H1 (cell line): ENCODE measurements at regions of chr17 and their contacts with region 1.

Region 1: DNA sequence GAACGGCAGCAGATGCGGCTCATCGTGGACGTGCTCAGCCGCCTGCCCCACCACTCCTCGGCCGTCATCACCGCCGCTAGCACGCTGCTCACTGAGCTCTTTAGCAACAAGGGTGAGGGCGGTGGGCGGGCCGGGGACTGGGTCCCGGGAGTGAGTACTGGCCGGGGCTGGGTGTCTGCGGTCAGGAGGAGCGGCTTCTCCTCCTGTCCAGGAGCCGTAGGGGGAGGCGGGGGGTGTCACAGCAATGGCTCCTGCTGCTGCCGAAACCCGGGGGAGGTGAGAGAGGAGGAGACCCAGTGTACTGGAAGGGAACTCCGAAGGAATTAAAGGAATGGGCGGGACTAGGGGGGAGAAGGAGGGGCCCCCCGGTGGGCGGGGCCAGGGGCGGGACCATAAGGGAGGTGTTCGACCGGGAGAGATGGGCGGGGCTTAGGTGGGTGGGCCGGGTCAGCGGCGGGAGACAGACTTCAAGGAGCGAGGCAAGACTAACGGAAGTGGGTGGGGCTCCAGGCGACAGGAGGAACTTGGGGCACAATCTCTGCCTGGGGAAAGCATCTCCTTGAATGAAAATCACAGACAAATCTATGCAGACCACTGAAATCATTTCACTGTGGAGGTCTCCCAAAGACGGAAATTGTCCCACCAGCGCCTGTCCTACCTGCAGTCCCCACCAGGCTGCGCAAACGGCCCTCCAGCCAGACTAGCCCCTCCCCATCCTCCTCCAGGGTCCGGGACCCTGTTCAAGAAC is 2.4 kb downstream of the NAGS start:
- DNase-seq: peak; percentile 94 to 98
- H3K4me3 ChIP-seq: peak overlapping the region; percentile 72 to 86 (median 82)
- H3K27ac ChIP-seq: no peak overlapping the region
- H3K4me1 ChIP-seq: peaks cover 0 to 19% (median 13%) of the 10 kb centered on the region in 4 experiments; a peak in 6 of 7 replicates
- H3K27me3 ChIP-seq: peaks cover 0 to 21% (median 17%) of the 10 kb centered on the region in 4 experiments; a peak in 6 of 7 replicates
- CTCF ChIP-seq: peak; percentile 61 to 78 (median 76)
- EP300 ChIP-seq: no peak
- POLR2A ChIP-seq: no peak; a peak in 1 of 3 replicates
- RAD21 ChIP-seq: peak; percentile 42 to 55; a peak in 3 of 4 replicates

Region 2: GRCh38 chr17:43907425-43907981 is 99.3 kb before region 1 on chr17 and contains the start of gene MPP2:
- CTCF ChIA-PET with region 1: interaction called, 17 read pairs
- POLR2A ChIA-PET with region 1: no interaction called
- DNase-seq: peak in 1 of 2 experiments; percentile 91
- H3K4me3 ChIP-seq: peak within 1 kb of the TSS; percentile 42 to 81 (median 68)
- H3K27ac ChIP-seq: no peak within 1 kb of the TSS
- H3K4me1 ChIP-seq: peaks cover 4 to 23% (median 19%) of the 10 kb centered on the region in 4 experiments
- H3K27me3 ChIP-seq: peaks cover 0 to 21% (median 15%) of the 10 kb centered on the region in 4 experiments; a peak in 5 of 7 replicates
- CTCF ChIP-seq: no peak
- EP300 ChIP-seq: no peak
- POLR2A ChIP-seq: no peak
- RAD21 ChIP-seq: no peak
- total RNA-seq, gene MPP2: 30.9 and 31.6 TPM in 2 replicates

Region 3: DNA sequence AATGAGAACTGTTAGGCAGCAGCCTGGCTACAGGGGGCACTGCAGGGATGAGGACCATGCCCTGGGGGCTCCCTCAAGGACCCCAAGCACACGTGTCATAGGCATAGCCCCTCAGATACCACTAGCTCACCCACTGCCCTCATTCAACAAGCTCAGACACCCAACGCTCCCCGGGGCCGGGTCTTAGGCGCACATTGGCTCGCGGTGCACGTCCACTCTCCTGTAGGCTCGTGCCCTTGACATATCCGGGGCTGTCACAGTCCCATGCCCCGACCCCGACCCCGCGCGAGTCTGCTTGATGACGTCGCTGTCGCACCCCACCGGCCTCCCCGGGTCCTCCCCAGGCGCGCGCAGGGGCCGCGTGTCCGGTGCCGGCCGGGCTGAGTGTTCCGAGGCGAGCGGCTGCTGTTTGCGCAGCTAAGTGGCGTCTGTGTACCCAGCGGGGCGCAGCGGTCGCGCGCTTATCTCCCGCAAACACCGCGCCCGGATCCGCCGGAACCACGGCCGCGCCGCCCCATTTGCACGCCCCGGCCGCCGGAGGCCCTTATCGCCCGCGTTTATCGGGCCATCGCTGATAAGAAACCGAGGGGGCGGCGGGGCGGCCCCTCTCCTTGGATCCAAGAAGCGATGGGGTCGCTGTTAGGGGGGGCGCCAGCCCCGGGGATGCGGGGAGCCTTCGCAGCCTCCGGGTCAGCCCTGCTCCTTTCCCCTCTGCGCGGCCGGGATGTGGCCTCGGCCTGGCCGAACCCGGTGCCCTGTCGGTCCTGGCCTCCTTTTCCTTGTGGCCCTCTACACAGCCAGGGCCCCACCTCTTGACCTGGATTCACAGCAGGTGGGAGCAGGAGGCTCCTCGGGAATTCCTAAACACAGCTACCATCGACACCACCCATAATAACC is 23.0 kb before region 1 on chr17:
- CTCF ChIA-PET with region 1: interaction called, 32 read pairs
- POLR2A ChIA-PET with region 1: interaction called, 4 read pairs
- DNase-seq: peak in 1 of 2 experiments; percentile 82
- H3K4me3 ChIP-seq: peak overlapping the region; percentile 53 to 75 (median 60)
- H3K27ac ChIP-seq: no peak overlapping the region
- H3K4me1 ChIP-seq: peaks cover 0 to 4% (median 2%) of the 10 kb centered on the region in 4 experiments; a peak in 4 of 7 replicates
- H3K27me3 ChIP-seq: peaks cover 0 to 5% (median 4%) of the 10 kb centered on the region in 4 experiments; a peak in 3 of 7 replicates
- CTCF ChIP-seq: peak; percentile 63 to 85 (median 80)
- EP300 ChIP-seq: no peak
- POLR2A ChIP-seq: no peak
- RAD21 ChIP-seq: peak; percentile 24 to 53

Region 4: DNA sequence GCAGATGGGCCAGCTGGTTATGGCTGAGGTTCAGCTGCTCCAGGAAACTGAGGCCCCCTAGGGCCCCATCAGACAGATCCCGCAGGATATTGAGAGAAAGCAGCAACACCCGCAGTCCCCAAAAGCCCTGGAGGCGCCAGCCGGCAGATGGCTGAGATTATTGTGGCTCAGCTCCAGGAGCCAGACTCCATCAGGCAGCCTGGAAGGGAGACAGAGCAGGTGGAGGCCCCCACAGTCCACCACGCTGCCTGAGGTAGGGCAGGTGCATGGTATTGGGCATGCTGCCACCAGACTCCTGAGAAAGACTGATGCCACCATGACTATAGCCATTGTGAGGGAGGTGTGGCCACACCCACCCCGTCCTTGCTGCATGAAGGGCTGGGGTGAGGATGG is 17.5 kb after region 1 on chr17:
- CTCF ChIA-PET with region 1: interaction called, 19 read pairs
- POLR2A ChIA-PET with region 1: interaction called, 23 read pairs
- DNase-seq: no peak
- H3K4me3 ChIP-seq: no peak overlapping the region
- H3K27ac ChIP-seq: no peak overlapping the region
- H3K4me1 ChIP-seq: no peaks in the 10 kb centered on the region
- H3K27me3 ChIP-seq: no peaks in the 10 kb centered on the region
- CTCF ChIP-seq: no peak
- EP300 ChIP-seq: no peak
- POLR2A ChIP-seq: no peak
- RAD21 ChIP-seq: no peak

Region 5: DNA sequence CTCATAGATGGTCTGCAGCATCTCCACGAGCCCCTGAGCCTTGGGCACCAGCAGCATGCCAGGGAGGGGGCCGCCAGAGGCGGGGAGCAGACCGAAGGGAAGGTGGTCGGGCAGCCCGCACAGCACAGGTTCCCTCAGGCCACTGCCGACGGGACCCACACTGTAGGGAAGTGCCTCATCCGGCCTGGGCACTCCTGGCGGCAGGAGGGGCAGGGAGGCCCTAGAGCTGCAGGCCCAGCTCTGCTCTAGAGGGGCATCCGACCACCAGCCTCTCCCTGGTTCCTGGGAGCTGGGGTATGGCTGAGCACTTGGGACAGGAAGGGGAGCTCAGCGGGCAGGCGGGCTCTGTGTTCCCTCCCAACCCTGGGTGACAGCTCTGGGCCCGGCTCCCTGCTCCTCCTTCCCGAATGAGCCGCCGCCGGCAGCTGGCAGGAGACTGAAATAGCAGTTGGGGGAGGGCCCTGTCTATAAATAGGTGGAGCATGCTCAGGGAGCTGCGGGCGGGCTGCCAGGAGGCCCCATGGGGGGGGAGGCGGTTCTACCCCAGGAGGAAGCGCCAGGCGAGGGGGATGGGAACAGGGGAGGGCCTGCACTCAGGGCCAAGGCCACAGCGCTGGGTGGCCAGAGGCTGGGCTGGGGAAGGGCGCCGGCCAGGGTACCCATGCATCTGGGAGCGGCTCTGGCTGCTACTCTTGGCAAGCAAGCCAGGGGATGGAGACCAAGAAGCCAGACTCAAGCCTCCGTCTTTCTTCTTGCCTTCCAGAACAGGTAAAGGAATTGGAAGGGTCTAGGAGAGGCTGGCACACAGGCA is 104.3 kb after region 1 on chr17:
- CTCF ChIA-PET with region 1: interaction called, 25 read pairs
- POLR2A ChIA-PET with region 1: interaction called, 6 read pairs
- DNase-seq: peak; percentile 69 to 86
- H3K4me3 ChIP-seq: peak overlapping the region in 3 of 4 experiments; percentile 1 to 45 (median 15); a peak in 4 of 8 replicates
- H3K27ac ChIP-seq: no peak overlapping the region
- H3K4me1 ChIP-seq: peaks cover 0 to 29% (median 25%) of the 10 kb centered on the region in 4 experiments; a peak in 6 of 7 replicates
- H3K27me3 ChIP-seq: no peaks in the 10 kb centered on the region; a peak in 1 of 7 replicates
- CTCF ChIP-seq: no peak
- EP300 ChIP-seq: no peak
- POLR2A ChIP-seq: peak in 1 of 2 experiments; percentile 60; a peak in 1 of 3 replicates
- RAD21 ChIP-seq: peak in 1 of 2 experiments; percentile 9; a peak in 1 of 4 replicates

Region 6: DNA sequence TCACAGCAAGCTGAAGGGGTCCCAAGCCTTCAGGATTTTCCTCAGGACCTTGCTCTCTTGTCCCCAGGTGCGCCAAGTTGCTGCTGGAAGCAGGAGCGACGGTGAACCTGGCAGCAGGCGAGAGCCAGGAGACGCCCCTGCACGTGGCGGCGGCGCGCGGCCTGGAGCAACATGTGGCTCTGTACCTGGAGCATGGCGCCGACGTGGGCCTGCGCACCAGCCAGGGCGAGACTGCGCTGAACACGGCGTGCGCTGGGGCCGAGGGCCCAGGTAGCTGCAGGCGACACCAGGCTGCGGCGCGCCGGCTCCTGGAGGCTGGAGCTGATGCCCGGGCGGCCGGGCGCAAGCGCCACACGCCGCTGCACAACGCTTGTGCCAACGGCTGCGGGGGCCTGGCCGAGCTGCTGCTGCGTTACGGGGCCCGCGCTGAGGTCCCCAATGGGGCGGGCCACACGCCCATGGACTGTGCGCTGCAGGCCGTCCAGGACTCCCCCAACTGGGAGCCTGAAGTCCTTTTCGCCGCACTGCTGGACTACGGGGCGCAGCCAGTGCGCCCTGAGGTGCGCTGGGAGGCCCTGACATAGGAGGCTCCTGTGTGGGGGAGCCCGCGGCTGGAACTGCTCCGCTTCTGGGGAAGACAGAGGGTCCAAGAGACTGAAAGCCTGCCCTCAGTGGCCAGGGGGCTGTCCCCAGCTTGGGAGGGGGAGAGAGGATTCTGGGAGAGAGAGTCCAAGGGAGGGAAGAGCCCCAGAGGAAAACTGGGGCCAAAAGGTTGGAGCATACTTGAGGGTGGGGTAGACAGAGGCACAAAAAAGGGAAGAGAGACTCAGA is 170.1 kb after region 1 on chr17:
- CTCF ChIA-PET with region 1: no interaction called
- POLR2A ChIA-PET with region 1: no interaction called
- DNase-seq: no peak
- H3K4me3 ChIP-seq: no peak overlapping the region
- H3K27ac ChIP-seq: no peak overlapping the region
- H3K4me1 ChIP-seq: no peaks in the 10 kb centered on the region
- H3K27me3 ChIP-seq: no peaks in the 10 kb centered on the region
- CTCF ChIP-seq: no peak
- EP300 ChIP-seq: no peak
- POLR2A ChIP-seq: no peak
- RAD21 ChIP-seq: no peak